Activated B cell treated with CpG ODN at 0.5 μM for 24 hours (primary cell): ENCODE measurements at regions of chr3 and their contacts with region 1.

Region 1: DNA sequence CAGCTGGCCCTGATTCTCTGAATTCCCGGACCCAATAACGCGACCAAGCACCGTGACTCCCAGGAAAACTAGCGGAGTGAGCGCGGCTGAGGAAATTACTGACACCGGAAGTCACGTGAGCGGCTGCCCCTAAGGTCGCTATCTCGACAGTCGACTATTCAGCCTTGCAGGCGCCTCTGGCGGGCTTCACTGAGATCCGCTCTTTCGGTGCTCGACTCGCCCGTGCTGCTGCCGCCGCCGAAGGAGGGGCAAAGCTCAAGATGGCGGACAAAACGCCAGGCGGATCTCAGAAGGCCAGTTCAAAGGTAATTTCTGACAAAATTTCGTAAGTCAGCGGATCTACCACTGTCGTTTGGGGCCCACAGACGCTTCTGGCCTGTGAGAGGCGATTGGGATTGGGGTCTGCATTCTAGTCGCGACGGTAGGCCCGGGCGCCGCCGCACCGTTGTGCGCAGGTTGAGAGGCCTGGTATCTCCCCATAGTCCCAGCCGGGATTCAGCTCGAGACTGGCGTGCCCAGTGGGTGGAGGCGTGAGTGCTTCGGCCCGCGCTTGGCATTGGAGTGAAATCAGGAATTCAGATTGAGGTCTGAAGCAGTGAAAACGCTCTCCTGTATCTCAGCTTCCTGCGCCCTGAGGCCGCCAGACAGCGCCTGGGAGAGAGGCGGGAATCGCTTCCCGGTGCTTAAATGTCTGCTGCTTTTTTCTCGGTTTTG is at the start of gene U2SURP:
- DNase-seq: peak; percentile 74
- ATAC-seq: peak; percentile 93
- H3K4me3 Mint-ChIP-seq: peak within 1 kb of the TSS; percentile 99
- H3K27ac Mint-ChIP-seq: peak within 1 kb of the TSS; percentile 98
- H3K4me1 Mint-ChIP-seq: peaks cover 41% of the 10 kb centered on the region
- H3K27me3 Mint-ChIP-seq: no peaks in the 10 kb centered on the region
- CTCF ChIP-seq: no peak
- total RNA-seq, gene U2SURP: 117 and 131 TPM in 2 replicates

Region 2: DNA sequence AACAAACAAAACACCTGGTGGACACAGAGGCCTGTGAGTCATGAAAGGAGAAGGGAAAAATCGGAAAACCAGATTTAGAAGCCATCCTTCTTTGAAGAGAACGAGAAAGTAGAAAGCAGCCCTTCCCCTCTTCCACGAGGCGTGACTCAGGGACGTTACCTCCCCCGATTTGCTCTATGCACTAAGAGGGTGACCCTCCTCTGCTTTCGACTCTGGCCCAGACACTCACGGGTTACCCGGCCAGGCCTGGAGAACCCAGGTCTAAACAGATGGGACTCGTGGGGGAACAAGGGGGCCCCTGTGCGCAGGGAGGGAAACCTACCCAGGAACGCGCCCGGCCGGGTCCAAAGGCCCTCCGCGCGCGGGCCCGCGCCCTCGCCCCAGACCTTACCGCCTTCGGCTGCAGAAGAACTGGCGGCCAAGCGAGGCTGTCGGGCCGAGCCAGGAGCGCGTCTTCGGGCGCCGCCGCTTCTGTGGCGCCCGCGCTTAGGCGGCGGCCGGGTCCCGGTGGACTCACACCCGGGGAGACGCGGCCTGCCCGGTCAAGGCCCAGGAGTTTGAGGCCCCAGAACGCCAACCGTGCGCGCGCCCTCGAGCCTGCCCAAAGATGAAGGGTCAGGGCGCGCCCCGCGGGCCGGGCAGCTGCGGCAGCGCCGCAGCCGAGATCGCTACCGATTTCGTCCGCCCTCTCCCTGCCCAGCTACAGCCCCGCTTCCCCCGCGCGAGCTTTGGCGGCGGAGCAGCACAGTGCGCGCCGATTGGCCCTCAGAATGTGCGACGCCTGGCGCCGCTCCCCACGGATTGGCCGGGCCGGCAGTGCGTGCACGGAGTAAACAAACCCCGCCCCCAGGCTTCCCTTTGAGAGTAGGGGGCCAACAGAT is 852.5 kb before region 1 on chr3 and contains the start of gene TFDP2:
- CTCF ChIA-PET with region 1: no interaction called
- POLR2A ChIA-PET with region 1: no interaction called
- intact Hi-C with region 1: loop called (anchors 5 kb)
- DNase-seq: peak; percentile 78
- ATAC-seq: peak; percentile 99
- H3K4me3 Mint-ChIP-seq: peak within 1 kb of the TSS; percentile 86
- H3K27ac Mint-ChIP-seq: peak within 1 kb of the TSS; percentile 72
- H3K4me1 Mint-ChIP-seq: peaks cover 14% of the 10 kb centered on the region
- H3K27me3 Mint-ChIP-seq: no peaks in the 10 kb centered on the region
- CTCF ChIP-seq: no peak
- total RNA-seq, gene TFDP2: 20.0 and 23.1 TPM in 2 replicates

Region 3: GRCh38 chr3:142447852-142448823 is 553.4 kb before region 1 on chr3 and contains the start of gene XRN1:
- CTCF ChIA-PET with region 1: no interaction called
- POLR2A ChIA-PET with region 1: interaction called, 14 read pairs
- intact Hi-C with region 1: loop called (anchors 1 kb)
- DNase-seq: peak; percentile 96
- ATAC-seq: peak; percentile 97
- H3K4me3 Mint-ChIP-seq: peak within 1 kb of the TSS; percentile 97
- H3K27ac Mint-ChIP-seq: peak within 1 kb of the TSS; percentile 98
- H3K4me1 Mint-ChIP-seq: peaks cover 44% of the 10 kb centered on the region
- H3K27me3 Mint-ChIP-seq: no peaks in the 10 kb centered on the region
- CTCF ChIP-seq: no peak
- total RNA-seq, gene XRN1: 55.0 and 63.0 TPM in 2 replicates

Region 4: DNA sequence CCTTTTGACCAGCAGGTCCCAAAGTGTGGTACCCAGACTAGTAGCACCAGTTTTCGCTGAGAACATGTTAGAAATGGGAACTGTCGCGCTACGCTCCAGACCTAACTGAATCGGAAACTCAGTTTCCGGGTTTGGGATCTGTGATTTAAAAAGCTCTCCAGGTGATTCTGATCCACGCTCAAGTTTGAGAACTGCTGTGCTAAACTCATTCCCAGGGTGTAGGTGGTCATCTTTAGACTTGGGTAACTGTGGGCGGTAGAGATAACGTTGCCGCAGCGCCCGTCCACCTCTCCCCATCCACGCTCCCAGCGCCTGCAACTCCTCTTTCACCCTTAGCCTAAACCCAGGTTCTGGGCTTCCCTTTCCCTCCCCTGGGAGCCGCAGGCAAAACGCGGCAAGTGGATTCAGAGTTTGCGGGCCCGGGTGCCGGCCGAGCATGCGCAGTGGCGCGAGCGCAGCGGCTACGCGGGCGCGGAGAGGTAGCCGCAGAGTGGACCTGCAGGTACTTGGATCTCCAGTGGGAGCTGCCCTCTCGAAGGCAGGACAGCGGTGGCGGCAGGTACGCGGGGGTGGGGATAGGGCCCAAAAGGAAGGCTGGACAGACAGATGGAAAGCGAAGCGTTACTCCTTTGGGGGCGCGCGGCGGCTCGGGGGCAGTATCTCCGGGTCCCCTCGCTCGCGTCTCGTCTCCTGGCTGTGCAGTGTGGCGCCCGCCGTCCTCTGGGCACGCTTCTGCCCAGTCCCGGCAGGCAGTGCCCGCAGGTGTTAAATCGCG is 405.4 kb before region 1 on chr3 and contains the start of gene PLS1:
- CTCF ChIA-PET with region 1: no interaction called
- POLR2A ChIA-PET with region 1: interaction called, 3 read pairs
- intact Hi-C with region 1: loop called (anchors 5 kb)
- DNase-seq: peak; percentile 89
- ATAC-seq: peak; percentile 84
- H3K4me3 Mint-ChIP-seq: peak within 1 kb of the TSS; percentile 95
- H3K27ac Mint-ChIP-seq: peak within 1 kb of the TSS; percentile 56
- H3K4me1 Mint-ChIP-seq: peaks cover 16% of the 10 kb centered on the region
- H3K27me3 Mint-ChIP-seq: peaks cover 12% of the 10 kb centered on the region
- CTCF ChIP-seq: no peak
- total RNA-seq, gene PLS1: 0.66 and 0.91 TPM in 2 replicates

Region 5: GRCh38 chr3:142896201-142896755 is 105.2 kb before region 1 on chr3:
- CTCF ChIA-PET with region 1: no interaction called
- POLR2A ChIA-PET with region 1: no interaction called
- intact Hi-C with region 1: no loop called
- DNase-seq: no peak
- ATAC-seq: no peak
- H3K4me3 Mint-ChIP-seq: no peak overlapping the region
- H3K27ac Mint-ChIP-seq: no peak overlapping the region
- H3K4me1 Mint-ChIP-seq: no peaks in the 10 kb centered on the region
- H3K27me3 Mint-ChIP-seq: peaks cover 24% of the 10 kb centered on the region
- CTCF ChIP-seq: no peak

Region 6: DNA sequence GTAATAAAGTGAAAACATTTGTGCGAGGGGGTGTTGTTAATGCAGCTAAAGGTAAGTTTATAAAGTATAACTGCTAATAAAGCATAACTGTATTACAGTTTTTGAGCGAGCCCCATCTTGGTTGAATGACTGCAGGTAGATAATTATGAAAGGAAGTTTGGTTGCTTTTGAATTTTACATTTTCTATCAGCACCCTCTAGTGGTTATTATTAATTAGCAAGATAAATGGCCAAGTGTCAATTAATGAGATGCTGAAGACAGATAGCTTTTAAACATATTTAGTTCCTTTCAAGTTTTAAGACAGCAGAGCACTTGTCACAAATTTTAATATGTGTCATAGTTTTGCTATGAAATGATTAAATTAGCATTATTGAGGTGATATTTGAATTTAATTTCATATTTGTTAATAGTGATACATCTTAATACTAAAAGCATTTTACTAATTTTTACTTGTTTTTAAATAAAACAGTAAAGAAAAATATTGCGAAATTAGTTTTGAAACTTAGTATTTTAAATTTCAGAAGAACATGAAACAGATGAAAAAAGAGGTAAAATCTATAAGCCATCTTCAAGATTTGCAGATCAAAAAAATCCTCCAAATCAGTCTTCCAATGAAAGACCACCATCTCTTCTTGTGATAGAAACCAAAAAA is 14.9 kb after region 1 on chr3:
- CTCF ChIA-PET with region 1: interaction called, 13 read pairs
- POLR2A ChIA-PET with region 1: interaction called, 11 read pairs
- intact Hi-C with region 1: loop called (anchors 1 kb)
- DNase-seq: no peak
- ATAC-seq: no peak
- H3K4me3 Mint-ChIP-seq: no peak overlapping the region
- H3K27ac Mint-ChIP-seq: no peak overlapping the region
- H3K4me1 Mint-ChIP-seq: peaks cover 10% of the 10 kb centered on the region
- H3K27me3 Mint-ChIP-seq: no peaks in the 10 kb centered on the region
- CTCF ChIP-seq: peak; percentile 79

Region 7: DNA sequence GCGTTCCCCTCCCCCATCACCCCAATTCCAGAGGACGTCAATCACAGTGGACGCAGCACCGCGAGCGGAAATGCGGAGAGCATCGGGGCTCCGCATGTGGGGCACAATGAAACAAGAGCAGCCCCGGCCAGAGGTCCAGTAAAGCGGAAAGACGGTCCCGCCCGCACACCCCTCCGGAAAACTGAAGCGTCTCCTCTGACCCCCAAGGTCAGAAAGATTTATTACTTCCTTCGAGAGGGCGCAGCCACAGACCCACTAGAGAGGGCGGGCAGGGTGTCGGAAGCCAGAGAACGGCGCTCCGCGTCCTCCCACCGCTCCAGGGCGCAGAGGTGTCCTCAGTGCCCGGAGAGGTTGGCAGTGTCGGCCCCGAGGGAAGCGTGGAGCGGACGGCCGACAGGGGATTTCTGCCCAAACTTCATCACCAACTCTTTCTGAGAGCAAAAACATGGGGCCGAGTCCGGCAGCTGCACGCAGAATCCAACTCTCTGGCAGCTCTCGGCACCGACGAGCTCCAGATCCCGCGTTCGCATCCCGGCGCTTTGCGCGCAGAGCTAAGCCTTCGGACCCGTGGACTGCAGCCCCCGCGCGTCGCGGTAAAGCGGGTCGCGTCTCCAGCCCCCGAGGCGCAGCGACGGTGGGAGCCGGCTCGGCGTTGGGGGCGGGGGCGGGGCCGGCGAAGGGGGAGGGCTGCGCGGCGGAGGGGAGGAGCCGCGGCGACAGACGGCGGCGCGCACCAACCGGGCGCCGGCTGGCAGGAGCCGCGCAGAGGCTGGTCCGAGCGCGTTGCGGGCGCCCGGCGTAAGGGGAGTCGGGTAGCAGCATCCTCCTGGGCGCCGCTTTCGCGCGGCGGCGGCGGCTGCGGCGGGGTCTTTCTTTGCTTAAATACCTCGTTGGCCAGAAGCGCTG is 117.7 kb after region 1 on chr3 and contains the start of gene CHST2:
- CTCF ChIA-PET with region 1: no interaction called
- POLR2A ChIA-PET with region 1: interaction called, 10 read pairs
- intact Hi-C with region 1: loop called (anchors 1 kb)
- DNase-seq: peak; percentile 77
- ATAC-seq: peak; percentile 89
- H3K4me3 Mint-ChIP-seq: peak within 1 kb of the TSS; percentile 90
- H3K27ac Mint-ChIP-seq: peak within 1 kb of the TSS; percentile 78
- H3K4me1 Mint-ChIP-seq: peaks cover 32% of the 10 kb centered on the region
- H3K27me3 Mint-ChIP-seq: no peaks in the 10 kb centered on the region
- CTCF ChIP-seq: no peak
- total RNA-seq, gene CHST2: 11.8 and 12.3 TPM in 2 replicates